Mammary epithelial cell (primary cell): ENCODE measurements at regions of chr7 and their contacts with region 1.

Region 1: GRCh38 chr7:116122972-116123595 is 87.3 kb upstream of the TES start:
- DNase-seq: peak; percentile 24
- H3K4me3 ChIP-seq: no peak overlapping the region
- H3K27ac ChIP-seq: no peak overlapping the region
- H3K4me1 ChIP-seq: no peaks in the 10 kb centered on the region
- H3K27me3 ChIP-seq: no peaks in the 10 kb centered on the region
- CTCF ChIP-seq: peak; percentile 80 to 85

Region 2: DNA sequence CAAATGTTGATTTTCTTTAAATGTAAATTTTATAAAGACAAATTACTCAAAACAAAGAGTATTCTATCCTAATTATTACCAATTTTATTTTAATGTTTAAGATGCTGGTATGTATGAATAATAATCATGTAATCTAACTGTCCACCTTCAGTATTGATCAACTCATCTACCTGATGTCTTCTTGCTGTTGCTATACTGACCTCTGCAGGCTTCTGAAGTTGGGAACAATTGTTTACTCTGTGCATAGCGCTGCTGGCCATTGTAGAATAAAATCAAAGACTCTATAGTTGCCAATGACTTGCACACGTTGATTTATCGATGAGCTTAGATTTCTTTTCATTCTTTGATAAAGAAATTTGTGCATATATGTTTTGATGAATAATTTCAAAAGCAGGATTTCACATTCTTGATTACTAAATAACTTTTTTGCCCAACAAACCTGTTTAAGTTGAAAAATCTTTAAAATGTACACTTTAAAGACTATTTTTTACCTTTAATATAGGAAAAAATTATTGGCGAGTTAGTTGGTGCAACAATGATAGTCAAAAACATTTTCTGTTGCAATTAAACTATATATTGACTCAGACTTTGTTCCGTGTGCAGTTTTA is 374.8 kb before region 1 on chr7:
- CTCF ChIA-PET with region 1: no interaction called
- dilution Hi-C with region 1: no loop called
- in situ Hi-C with region 1: no loop called
- intact Hi-C with region 1: loop called (anchors 10 kb)
- DNase-seq: no peak
- H3K4me3 ChIP-seq: no peak overlapping the region
- H3K27ac ChIP-seq: no peak overlapping the region
- H3K4me1 ChIP-seq: no peaks in the 10 kb centered on the region
- H3K27me3 ChIP-seq: no peaks in the 10 kb centered on the region
- CTCF ChIP-seq: peak in 1 of 2 donors; percentile 52

Region 3: GRCh38 chr7:115851291-115851690 is 271.8 kb before region 1 on chr7:
- CTCF ChIA-PET with region 1: interaction called, 3 read pairs
- dilution Hi-C with region 1: no loop called
- in situ Hi-C with region 1: no loop called
- intact Hi-C with region 1: loop called (anchors 1 kb)
- DNase-seq: peak; percentile 14
- H3K4me3 ChIP-seq: no peak overlapping the region
- H3K27ac ChIP-seq: no peak overlapping the region
- H3K4me1 ChIP-seq: no peaks in the 10 kb centered on the region
- H3K27me3 ChIP-seq: peaks cover 3% of the 10 kb centered on the region
- CTCF ChIP-seq: peak; percentile 33 to 43

Region 4: DNA sequence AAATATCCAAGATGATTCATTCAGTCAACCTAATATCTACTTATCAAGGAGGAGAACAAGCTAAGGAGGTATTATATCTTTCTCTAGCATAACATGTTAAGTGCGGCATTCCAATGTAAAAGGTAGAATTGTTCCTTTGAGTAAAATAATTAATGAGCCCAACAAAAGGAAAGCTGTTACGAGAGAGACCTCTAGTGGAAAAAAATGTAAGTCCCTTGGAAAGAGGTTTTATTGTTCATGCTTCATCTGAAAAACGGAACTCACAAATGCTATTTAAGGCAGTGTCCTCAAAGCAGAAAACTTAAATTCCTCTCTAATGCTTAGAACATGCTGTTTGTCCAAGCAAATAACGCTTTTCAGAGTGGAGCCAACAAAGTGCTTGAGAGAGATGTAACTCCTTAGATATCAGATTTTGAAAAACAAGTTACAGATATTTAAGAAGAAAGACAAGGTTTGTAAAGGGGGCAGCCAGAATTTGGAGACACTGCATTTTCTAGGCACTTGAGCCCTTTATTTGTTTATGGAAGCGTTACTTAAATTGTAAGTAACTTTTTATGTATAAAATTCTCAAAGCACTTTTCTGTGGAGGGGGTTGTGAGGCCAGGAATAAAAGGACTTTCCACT is 212.4 kb before region 1 on chr7:
- CTCF ChIA-PET with region 1: interaction called, 4 read pairs
- dilution Hi-C with region 1: no loop called
- in situ Hi-C with region 1: no loop called
- intact Hi-C with region 1: loop called (anchors 2 kb)
- DNase-seq: peak; percentile 11
- H3K4me3 ChIP-seq: no peak overlapping the region
- H3K27ac ChIP-seq: no peak overlapping the region
- H3K4me1 ChIP-seq: no peaks in the 10 kb centered on the region
- H3K27me3 ChIP-seq: peaks cover 8% of the 10 kb centered on the region
- CTCF ChIP-seq: peak; percentile 34 to 64

Region 5: GRCh38 chr7:116062666-116063065 is 60.4 kb before region 1 on chr7:
- CTCF ChIA-PET with region 1: no interaction called
- dilution Hi-C with region 1: no loop called
- in situ Hi-C with region 1: no loop called
- intact Hi-C with region 1: no loop called
- DNase-seq: no peak
- H3K4me3 ChIP-seq: no peak overlapping the region
- H3K27ac ChIP-seq: no peak overlapping the region
- H3K4me1 ChIP-seq: no peaks in the 10 kb centered on the region
- H3K27me3 ChIP-seq: no peaks in the 10 kb centered on the region
- CTCF ChIP-seq: no peak

Region 6: DNA sequence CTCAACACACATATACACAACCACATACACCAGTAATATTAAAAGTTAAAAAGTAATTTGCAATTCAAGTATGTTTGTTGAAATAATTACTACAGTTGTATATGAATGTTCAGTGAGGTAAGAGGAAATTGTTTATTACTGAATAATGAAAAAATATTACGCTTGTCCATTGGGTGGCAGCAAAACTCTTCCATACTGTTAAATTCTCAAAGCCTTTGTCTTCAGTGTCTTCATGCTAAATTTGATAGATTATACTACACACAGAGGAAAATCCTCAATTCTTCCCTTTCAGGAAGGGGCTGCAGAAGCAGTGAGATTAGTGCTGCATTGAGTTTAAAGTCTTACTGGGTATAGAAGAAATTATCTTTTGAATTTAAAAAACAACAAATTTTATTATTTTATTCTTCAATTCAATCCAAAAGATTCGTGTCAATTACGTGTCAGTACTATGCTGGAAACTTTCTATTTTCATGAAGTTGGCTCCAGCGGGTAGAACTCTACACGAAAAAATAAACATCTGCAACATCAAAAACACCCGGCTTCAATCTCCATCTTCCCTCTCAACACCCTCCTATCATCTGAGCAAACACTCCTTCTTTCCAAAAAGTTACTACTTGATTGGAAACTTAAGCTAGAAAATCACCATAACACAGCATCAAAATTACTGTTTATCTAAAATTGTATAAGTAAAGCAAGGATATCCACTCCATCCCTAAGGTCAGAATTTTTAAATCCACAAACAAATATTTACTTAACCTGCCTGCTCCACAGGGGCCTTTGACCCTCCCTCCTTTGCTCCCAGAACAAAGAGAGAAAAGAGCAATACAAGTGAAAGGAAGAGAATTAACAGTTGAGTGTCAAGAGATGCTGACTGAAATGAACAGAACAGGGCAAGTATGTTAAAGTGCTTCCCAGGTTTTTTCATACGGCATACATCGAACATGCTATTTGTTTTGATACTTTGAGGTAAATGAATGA is 50.3 kb after region 1 on chr7:
- CTCF ChIA-PET with region 1: no interaction called
- dilution Hi-C with region 1: no loop called
- in situ Hi-C with region 1: no loop called
- intact Hi-C with region 1: no loop called
- DNase-seq: peak; percentile 54
- H3K4me3 ChIP-seq: no peak overlapping the region
- H3K27ac ChIP-seq: no peak overlapping the region
- H3K4me1 ChIP-seq: peaks cover 25% of the 10 kb centered on the region
- H3K27me3 ChIP-seq: no peaks in the 10 kb centered on the region
- CTCF ChIP-seq: peak; percentile 35 to 46

Region 7: GRCh38 chr7:116588641-116589594 is 465.8 kb after region 1 on chr7:
- CTCF ChIA-PET with region 1: no interaction called
- dilution Hi-C with region 1: no loop called
- in situ Hi-C with region 1: no loop called
- intact Hi-C with region 1: no loop called
- DNase-seq: peak; percentile 44
- H3K4me3 ChIP-seq: no peak overlapping the region
- H3K27ac ChIP-seq: peak overlapping the region; percentile 32
- H3K4me1 ChIP-seq: peaks cover 16% of the 10 kb centered on the region
- H3K27me3 ChIP-seq: no peaks in the 10 kb centered on the region
- CTCF ChIP-seq: peak; percentile 45 to 57